Kidney (tissue), 22 donors: ENCODE measurements at regions of chr7 and their contacts with region 1.

Region 1: GRCh38 chr7:74722153-74722552 is 51.7 kb upstream of the NCF1 start:
- DNase-seq: no peak
- H3K4me3 ChIP-seq: no peak overlapping the region
- H3K27ac ChIP-seq: no peak overlapping the region
- H3K4me1 ChIP-seq: peaks cover 0 to 2% (median 0%) of the 10 kb centered on the region in 3 donors
- H3K27me3 ChIP-seq: no peaks in the 10 kb centered on the region
- CTCF ChIP-seq: no peak

Region 2: DNA sequence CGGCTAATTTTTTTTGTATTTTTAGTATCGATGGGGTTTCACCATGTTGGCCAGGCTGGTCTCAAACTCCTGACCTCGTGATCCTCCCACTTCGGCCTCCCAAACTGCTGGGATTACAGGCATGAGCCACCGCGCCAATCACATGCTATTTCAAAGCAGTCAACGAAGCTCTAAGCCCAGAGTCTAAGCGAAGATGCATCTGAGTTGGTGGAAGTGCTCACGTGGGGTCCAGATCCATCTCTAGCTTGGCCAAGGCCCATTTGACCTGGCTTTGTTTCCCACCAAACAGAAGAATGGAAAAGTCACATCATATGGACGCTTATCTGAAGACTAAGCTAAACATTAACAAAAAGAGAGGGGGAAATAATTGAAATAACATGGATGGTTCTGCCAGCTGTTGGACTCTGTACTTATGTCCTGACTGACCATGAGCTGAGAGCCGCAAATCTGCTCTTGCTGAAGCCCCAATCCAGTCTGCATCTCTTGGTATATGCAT is 68.4 kb before region 1 on chr7:
- intact Hi-C with region 1: loop called (anchors 10 kb)
- DNase-seq: peak in 1 of 5 donors; percentile 50
- H3K4me3 ChIP-seq: no peak overlapping the region
- H3K27ac ChIP-seq: no peak overlapping the region
- H3K4me1 ChIP-seq: peaks cover 0 to 4% (median 3%) of the 10 kb centered on the region in 3 donors
- H3K27me3 ChIP-seq: no peaks in the 10 kb centered on the region
- CTCF ChIP-seq: no peak